ENCODE measurements at regions of chr5 and their contacts with region 1.

Region 1: DNA sequence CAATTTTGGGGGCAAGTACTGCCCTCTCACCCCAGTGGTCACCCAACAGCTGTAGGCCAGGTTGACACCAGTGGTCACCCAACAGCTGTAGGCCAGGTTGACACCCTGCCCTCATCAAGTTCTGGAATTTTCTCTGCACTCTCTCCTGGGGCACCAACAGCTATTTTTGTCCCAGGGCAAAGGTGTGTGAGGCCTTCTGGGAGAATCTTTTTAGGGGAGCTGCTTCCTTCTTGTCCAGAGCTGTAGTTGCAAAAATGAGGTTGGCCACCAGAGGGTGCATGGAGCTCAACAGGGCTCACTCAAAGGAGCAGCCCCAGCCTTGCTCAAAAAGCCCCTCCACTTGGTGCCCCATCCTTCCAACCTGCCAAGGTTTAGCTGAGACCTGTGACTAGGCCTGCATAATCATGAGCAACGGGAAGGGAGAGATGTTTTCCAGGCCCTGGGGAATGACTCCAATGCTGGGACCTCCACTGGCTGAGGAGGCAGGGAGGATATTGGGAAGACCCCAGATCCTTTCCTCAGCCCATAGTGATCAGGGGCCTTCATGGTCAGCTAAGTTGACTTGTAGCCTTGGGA is 10.6 kb upstream of the P4HA2 start:
- DNase-seq: peak; percentile 89
- ATAC-seq: peak; percentile 95
- H3K4me3 Mint-ChIP-seq: no peak overlapping the region
- H3K27ac Mint-ChIP-seq: no peak overlapping the region
- H3K4me1 Mint-ChIP-seq: no peaks in the 10 kb centered on the region
- H3K27me3 Mint-ChIP-seq: no peaks in the 10 kb centered on the region; the same call in 1 of the 2 replicates
- CTCF ChIP-seq: peak; percentile 78

Region 2: GRCh38 chr5:131766689-131767088 is 471.6 kb before region 1 on chr5:
- CTCF ChIA-PET with region 1: no interaction called
- POLR2A ChIA-PET with region 1: no interaction called
- DNase-seq: no peak
- ATAC-seq: no peak
- H3K4me3 Mint-ChIP-seq: no peak overlapping the region
- H3K27ac Mint-ChIP-seq: no peak overlapping the region
- H3K4me1 Mint-ChIP-seq: peaks cover 5% of the 10 kb centered on the region
- H3K27me3 Mint-ChIP-seq: no peaks in the 10 kb centered on the region
- CTCF ChIP-seq: no peak

Region 3: GRCh38 chr5:132134384-132134783 is 103.9 kb before region 1 on chr5:
- CTCF ChIA-PET with region 1: no interaction called
- POLR2A ChIA-PET with region 1: no interaction called
- DNase-seq: no peak
- ATAC-seq: no peak
- H3K4me3 Mint-ChIP-seq: no peak overlapping the region
- H3K27ac Mint-ChIP-seq: no peak overlapping the region
- H3K4me1 Mint-ChIP-seq: no peaks in the 10 kb centered on the region
- H3K27me3 Mint-ChIP-seq: no peaks in the 10 kb centered on the region; the same call in 1 of the 2 replicates
- CTCF ChIP-seq: no peak

Region 4: DNA sequence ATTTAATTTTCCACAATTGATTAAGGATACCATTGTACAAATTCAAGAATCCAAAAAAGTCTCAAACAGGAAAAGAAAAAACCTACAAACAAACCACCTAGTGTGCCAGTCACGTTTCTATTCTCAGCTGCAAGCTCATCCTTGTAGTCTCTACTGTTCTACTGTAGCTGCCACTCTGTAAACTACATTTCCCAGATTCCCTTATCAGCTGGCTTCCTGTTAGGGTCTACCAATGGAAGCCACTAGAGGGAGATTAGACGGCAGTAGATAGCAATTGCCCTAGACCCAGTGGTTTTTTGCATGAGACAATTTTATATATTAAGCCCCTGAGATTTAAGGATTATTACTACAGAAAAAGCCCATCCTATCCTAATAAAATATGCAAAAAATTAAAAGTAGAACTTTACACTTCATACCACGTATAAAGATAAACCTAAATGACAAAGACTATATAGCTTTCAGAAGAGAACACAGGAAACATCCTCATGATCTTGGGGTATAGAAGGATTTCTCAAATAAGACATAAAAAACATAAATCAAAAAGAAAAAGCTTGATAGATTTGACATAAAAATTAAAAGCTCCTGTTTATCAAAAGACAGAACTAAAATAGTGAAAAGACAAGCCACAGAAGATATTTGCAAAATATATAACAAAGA is 48.0 kb before region 1 on chr5:
- CTCF ChIA-PET with region 1: interaction called, 19 read pairs
- POLR2A ChIA-PET with region 1: no interaction called
- DNase-seq: no peak
- ATAC-seq: peak; percentile 100
- H3K4me3 Mint-ChIP-seq: no peak overlapping the region
- H3K27ac Mint-ChIP-seq: no peak overlapping the region
- H3K4me1 Mint-ChIP-seq: no peaks in the 10 kb centered on the region
- H3K27me3 Mint-ChIP-seq: no peaks in the 10 kb centered on the region; the same call in 1 of the 2 replicates
- CTCF ChIP-seq: peak; percentile 37

Region 5: DNA sequence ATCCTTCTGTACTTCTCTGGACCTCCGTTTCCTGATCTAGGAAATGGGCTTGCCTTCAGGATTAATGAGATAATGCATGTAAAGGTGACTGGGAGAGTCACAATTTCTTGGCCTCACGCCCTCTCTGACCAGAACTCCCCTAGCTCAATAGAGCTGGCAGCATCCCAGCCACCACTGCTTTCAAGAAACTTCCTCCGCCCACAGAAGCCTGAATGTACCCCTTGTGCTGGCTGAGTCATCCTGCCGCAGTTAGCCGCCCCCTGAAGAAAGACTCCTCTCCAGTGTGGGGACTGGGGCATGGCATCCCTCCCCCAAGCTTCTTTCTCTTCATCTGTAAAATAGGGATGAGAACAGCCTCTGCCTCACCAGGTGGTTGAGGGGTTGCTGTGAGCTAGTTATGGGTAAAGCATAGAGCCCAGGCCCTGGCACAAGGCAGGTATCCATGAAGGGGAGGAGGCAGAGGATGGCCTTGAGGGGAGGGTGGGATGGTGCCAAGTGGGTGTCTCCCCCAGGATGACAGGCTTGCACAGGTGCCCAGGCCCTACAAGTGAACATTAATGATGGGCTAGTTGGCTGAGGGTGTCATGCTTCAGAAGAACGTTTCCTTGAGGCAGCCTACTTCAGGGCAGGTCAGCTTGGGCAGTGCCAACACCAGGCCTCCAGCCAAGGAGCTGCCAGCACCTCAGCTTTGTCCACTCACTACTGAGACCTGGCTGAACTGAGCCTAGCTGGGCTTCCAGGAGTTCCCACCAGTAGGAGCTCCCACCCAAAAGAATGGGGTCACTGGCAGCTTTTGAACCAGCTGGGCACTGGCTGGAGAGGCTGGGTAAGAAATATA is 22.7 kb after region 1 on chr5:
- CTCF ChIA-PET with region 1: interaction called, 15 read pairs
- POLR2A ChIA-PET with region 1: no interaction called
- DNase-seq: no peak
- ATAC-seq: no peak
- H3K4me3 Mint-ChIP-seq: no peak overlapping the region
- H3K27ac Mint-ChIP-seq: no peak overlapping the region
- H3K4me1 Mint-ChIP-seq: peaks cover 9% of the 10 kb centered on the region
- H3K27me3 Mint-ChIP-seq: peaks cover 15% of the 10 kb centered on the region
- CTCF ChIP-seq: no peak

Region 6: GRCh38 chr5:132293066-132293991 is 55.1 kb after region 1 on chr5:
- CTCF ChIA-PET with region 1: interaction called, 20 read pairs
- POLR2A ChIA-PET with region 1: no interaction called
- DNase-seq: peak; percentile 77
- ATAC-seq: peak; percentile 57
- H3K4me3 Mint-ChIP-seq: peak overlapping the region; percentile 83
- H3K27ac Mint-ChIP-seq: peak overlapping the region; percentile 84
- H3K4me1 Mint-ChIP-seq: peaks cover 13% of the 10 kb centered on the region
- H3K27me3 Mint-ChIP-seq: peaks cover 38% of the 10 kb centered on the region
- CTCF ChIP-seq: no peak

Region 7: GRCh38 chr5:132344775-132345524 is 106.7 kb after region 1 on chr5:
- CTCF ChIA-PET with region 1: no interaction called
- POLR2A ChIA-PET with region 1: no interaction called
- DNase-seq: no peak
- ATAC-seq: no peak
- H3K4me3 Mint-ChIP-seq: no peak overlapping the region
- H3K27ac Mint-ChIP-seq: no peak overlapping the region
- H3K4me1 Mint-ChIP-seq: no peaks in the 10 kb centered on the region
- H3K27me3 Mint-ChIP-seq: peaks cover 7% of the 10 kb centered on the region
- CTCF ChIP-seq: no peak

Region 8: GRCh38 chr5:132410451-132411381 is 172.5 kb after region 1 on chr5:
- CTCF ChIA-PET with region 1: interaction called, 10 read pairs
- POLR2A ChIA-PET with region 1: no interaction called
- DNase-seq: peak; percentile 88
- ATAC-seq: peak; percentile 98
- H3K4me3 Mint-ChIP-seq: peak overlapping the region; percentile 70
- H3K27ac Mint-ChIP-seq: peak overlapping the region; percentile 44
- H3K4me1 Mint-ChIP-seq: peaks cover 8% of the 10 kb centered on the region
- H3K27me3 Mint-ChIP-seq: peaks cover 5% of the 10 kb centered on the region
- CTCF ChIP-seq: peak; percentile 56

Region 9: DNA sequence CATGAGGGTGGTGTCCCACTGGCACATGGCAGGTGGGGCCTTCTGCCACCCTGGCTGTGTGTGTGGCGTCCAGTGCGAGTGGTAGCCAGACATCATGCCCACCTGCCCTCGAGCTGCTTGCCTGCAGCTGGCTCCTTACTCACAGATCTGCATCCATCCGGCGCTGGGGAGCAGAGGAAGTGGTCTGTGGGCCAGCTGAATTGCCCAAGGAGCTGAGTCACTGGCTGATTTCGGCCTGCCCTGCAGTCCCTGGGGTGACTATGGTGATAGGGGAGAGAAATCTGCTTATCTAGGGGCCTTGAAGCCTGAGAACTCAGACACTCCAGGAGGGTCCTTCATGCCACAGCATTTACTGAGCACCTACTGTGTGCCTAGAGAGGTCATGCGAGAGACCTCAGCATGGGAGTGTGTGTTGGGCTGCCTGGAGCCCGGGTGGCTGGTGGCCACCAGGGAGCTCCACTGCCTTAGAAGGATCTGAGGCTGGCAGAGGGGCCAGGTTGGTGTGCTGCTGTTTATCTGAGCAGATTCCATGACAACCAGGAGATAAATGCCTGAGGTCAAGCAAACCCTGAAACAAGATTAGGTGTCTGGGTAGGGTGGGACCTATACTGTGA is 188.4 kb after region 1 on chr5:
- CTCF ChIA-PET with region 1: no interaction called
- POLR2A ChIA-PET with region 1: no interaction called
- DNase-seq: peak; percentile 41
- ATAC-seq: peak; percentile 85
- H3K4me3 Mint-ChIP-seq: no peak overlapping the region
- H3K27ac Mint-ChIP-seq: no peak overlapping the region
- H3K4me1 Mint-ChIP-seq: peaks cover 18% of the 10 kb centered on the region
- H3K27me3 Mint-ChIP-seq: no peaks in the 10 kb centered on the region
- CTCF ChIP-seq: no peak

Measured in WTC11 (cell line).